H1 (cell line): ENCODE measurements at regions of chr7 and their contacts with region 1.

Region 1: GRCh38 chr7:35519971-35520809 is 174.7 kb downstream of the HERPUD2 start:
- DNase-seq: peak in 1 of 2 experiments; percentile 81
- H3K4me3 ChIP-seq: no peak overlapping the region
- H3K27ac ChIP-seq: no peak overlapping the region
- H3K4me1 ChIP-seq: no peaks in the 10 kb centered on the region
- H3K27me3 ChIP-seq: no peaks in the 10 kb centered on the region
- CTCF ChIP-seq: peak; percentile 61 to 90 (median 85)
- EP300 ChIP-seq: no peak
- POLR2A ChIP-seq: no peak
- RAD21 ChIP-seq: peak; percentile 90 to 96

Region 2: GRCh38 chr7:35261476-35262285 is 258.5 kb before region 1 on chr7:
- CTCF ChIA-PET with region 1: interaction called, 12 read pairs
- POLR2A ChIA-PET with region 1: no interaction called
- DNase-seq: peak in 1 of 2 experiments; percentile 80
- H3K4me3 ChIP-seq: peak overlapping the region; percentile 37 to 65 (median 58)
- H3K27ac ChIP-seq: no peak overlapping the region
- H3K4me1 ChIP-seq: peaks cover 10 to 40% (median 11%) of the 10 kb centered on the region in 4 experiments; a peak in 6 of 7 replicates
- H3K27me3 ChIP-seq: peaks cover 53 to 73% (median 70%) of the 10 kb centered on the region in 4 experiments
- CTCF ChIP-seq: peak in 2 of 3 experiments; percentile 9 to 29; a peak in 2 of 4 replicates
- EP300 ChIP-seq: no peak
- POLR2A ChIP-seq: no peak
- RAD21 ChIP-seq: no peak; a peak in 1 of 4 replicates

Region 3: DNA sequence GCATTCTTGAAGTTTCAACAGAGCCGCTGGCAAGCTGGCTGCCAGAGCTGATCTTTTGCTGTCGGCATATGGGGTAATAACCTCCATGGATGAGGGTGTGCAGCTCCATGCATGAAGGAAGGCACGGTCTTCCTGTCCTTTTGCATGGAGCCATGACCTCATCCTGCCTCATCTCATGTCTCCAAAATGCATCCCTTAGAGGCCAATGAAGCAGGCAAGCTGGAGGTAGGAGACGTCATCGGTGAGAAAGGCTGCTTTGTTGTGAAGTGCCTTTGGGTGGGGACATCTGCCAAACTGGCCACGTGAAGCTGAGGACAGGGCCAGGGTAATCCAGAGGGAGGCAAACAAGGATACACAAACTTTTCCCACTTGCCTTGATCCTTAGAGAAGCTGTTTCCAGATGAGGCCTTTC is 104.8 kb before region 1 on chr7:
- CTCF ChIA-PET with region 1: interaction called, 15 read pairs
- POLR2A ChIA-PET with region 1: no interaction called
- DNase-seq: no peak
- H3K4me3 ChIP-seq: no peak overlapping the region
- H3K27ac ChIP-seq: no peak overlapping the region
- H3K4me1 ChIP-seq: no peaks in the 10 kb centered on the region
- H3K27me3 ChIP-seq: 0 out of 7 replicates have a peak, but pooled peaks cover 0 to 3% (median 0%) of the 10 kb centered on the region in 4 experiments
- CTCF ChIP-seq: no peak
- EP300 ChIP-seq: no peak
- POLR2A ChIP-seq: no peak
- RAD21 ChIP-seq: no peak

Region 4: DNA sequence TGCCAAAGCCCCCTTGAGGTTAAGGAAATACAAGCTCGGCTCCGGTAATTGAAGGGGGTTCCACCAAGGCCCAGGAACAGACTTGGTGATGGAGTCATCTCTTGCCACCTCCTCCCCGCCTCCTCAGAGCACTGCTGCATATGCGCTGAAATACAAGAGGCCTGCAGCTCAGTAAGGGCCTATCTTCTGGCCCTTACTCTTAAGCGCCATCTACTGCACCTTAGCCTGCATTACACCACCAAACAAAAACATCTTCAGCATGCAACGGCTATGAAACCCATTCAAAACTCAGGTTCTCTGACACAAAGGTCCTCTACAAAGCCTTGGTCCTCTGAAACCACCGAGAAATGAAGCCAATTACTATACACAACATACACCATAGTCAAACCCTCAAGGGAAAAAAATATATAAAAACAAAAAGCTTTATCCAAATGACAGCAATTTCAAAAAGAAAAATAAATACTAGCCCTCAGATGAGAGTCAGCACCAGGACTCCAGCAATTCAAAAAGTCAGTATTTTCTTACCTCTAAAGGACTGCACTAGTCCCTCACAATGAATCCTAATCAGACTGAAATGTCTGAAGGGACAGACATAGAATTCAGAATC is 89.5 kb before region 1 on chr7:
- CTCF ChIA-PET with region 1: interaction called, 55 read pairs
- POLR2A ChIA-PET with region 1: no interaction called
- DNase-seq: peak in 1 of 2 experiments; percentile 59
- H3K4me3 ChIP-seq: no peak overlapping the region
- H3K27ac ChIP-seq: no peak overlapping the region
- H3K4me1 ChIP-seq: no peaks in the 10 kb centered on the region
- H3K27me3 ChIP-seq: no peaks in the 10 kb centered on the region
- CTCF ChIP-seq: peak in 2 of 3 experiments; percentile 82 to 87; a peak in 3 of 4 replicates
- EP300 ChIP-seq: no peak
- POLR2A ChIP-seq: no peak
- RAD21 ChIP-seq: peak; percentile 83 to 89

Region 5: DNA sequence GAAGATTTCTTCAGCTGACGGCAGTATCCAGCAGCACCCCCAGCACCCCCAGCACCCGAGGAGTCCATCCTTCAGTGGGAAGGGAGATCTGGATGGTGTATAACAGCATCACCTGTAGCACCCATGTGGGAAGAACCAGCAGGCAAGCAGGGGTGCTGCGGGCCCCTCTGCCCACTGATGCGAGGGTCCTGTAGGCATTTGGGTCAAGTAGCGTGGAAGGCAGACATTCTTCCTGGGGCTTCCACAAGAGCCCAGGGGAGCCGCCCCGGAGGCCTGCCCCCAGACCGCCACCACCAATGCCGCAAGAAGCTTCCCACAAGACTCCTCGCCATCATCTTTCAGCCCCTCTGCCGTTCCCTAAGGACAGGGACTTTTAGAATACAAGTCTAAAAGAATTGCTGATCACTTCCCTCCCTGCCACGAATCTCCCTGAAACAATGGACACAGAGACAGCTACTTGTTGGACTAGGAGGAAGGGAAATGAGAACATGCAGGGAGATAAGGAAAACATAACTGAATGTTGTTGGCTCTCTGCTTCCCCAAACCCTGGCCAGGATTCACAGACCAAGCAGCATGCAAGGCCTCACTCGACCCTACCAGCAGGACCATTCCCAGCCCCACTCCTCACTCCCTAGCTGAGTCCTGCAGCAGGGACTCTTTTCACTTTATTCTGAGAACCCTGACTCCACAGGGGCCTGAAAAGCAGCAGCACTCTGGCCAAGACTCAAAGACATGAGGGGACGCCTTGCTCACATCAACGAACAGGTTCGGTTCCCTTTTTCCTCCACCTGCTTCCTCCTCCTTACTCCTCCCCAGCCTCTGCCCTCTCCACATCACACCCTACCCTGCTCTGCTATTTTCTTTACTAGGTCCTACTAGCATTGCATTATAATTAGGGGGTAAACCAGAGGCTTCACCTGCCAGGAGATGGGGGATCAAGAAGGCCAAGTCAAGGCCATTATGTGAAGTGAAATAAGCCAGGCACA is 10.2 kb after region 1 on chr7:
- CTCF ChIA-PET with region 1: interaction called, 12 read pairs
- POLR2A ChIA-PET with region 1: no interaction called
- DNase-seq: no peak
- H3K4me3 ChIP-seq: no peak overlapping the region
- H3K27ac ChIP-seq: no peak overlapping the region
- H3K4me1 ChIP-seq: no peaks in the 10 kb centered on the region
- H3K27me3 ChIP-seq: no peaks in the 10 kb centered on the region
- CTCF ChIP-seq: no peak
- EP300 ChIP-seq: no peak
- POLR2A ChIP-seq: no peak
- RAD21 ChIP-seq: no peak

Region 6: DNA sequence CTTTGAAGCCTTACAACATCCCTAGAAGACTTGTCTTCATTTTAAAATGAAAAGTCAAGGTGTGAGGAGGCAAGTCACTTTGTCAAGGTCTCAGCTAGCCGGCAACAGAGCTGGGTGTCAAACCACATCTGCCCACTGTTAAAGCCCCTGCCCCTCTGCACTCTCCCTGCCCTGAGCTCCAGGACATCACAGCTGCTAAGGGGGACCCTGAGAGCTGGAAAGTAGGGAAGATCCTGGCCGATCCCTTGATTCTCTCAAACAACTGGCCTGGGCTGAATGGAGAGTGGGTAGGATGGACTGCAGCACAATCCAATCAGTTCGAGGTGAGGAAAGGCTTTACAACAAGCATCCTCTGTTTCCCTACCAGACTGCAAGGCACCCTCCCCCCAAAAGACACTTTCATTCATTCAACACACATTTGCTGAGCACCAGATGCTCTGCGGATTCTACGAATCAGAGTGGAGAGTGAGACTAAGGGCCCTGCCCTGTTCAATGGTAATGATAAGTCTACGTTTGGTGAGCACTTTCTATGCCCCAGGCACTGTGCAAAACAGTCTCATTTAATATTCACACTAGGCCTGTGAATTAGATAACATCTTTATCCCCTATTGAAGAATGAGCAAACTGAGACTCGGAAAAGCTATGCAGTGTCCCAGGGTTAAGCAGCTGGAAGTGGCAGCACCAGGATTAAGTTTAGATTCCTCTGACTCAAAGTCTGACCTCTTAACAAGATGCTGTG is 26.7 kb after region 1 on chr7:
- CTCF ChIA-PET with region 1: interaction called, 10 read pairs
- POLR2A ChIA-PET with region 1: no interaction called
- DNase-seq: no peak
- H3K4me3 ChIP-seq: no peak overlapping the region
- H3K27ac ChIP-seq: no peak overlapping the region
- H3K4me1 ChIP-seq: 0 out of 7 replicates have a peak, but pooled peaks cover 0 to 2% (median 0%) of the 10 kb centered on the region in 4 experiments
- H3K27me3 ChIP-seq: no peaks in the 10 kb centered on the region
- CTCF ChIP-seq: no peak
- EP300 ChIP-seq: no peak
- POLR2A ChIP-seq: no peak
- RAD21 ChIP-seq: no peak